Activated CD8-positive, alpha-beta T cell treated with anti-CD3 and anti-CD28 coated beads, Interleukin-2, amount 10 ng/mL, durations not matched to agents 7 days and 5 days (primary cell): ENCODE measurements at regions of chr3 and their contacts with region 1.

Region 1: GRCh38 chr3:111616417-111617105 is 21.4 kb upstream of the ZBED2 start:
- DNase-seq: peak; percentile 82
- ATAC-seq: peak; percentile 91
- H3K4me3 Mint-ChIP-seq: peak overlapping the region; percentile 45
- H3K27ac Mint-ChIP-seq: peak overlapping the region; percentile 94
- H3K4me1 Mint-ChIP-seq: peaks cover 79% of the 10 kb centered on the region
- H3K27me3 Mint-ChIP-seq: no peaks in the 10 kb centered on the region

Region 2: GRCh38 chr3:111338059-111338698 is 278.4 kb before region 1 on chr3:
- CTCF ChIA-PET with region 1: no interaction called
- POLR2A ChIA-PET with region 1: no interaction called
- DNase-seq: peak; percentile 69
- ATAC-seq: no peak
- H3K4me3 Mint-ChIP-seq: no peak overlapping the region
- H3K27ac Mint-ChIP-seq: peak overlapping the region; percentile 12
- H3K4me1 Mint-ChIP-seq: peaks cover 23% of the 10 kb centered on the region
- H3K27me3 Mint-ChIP-seq: no peaks in the 10 kb centered on the region

Region 3: DNA sequence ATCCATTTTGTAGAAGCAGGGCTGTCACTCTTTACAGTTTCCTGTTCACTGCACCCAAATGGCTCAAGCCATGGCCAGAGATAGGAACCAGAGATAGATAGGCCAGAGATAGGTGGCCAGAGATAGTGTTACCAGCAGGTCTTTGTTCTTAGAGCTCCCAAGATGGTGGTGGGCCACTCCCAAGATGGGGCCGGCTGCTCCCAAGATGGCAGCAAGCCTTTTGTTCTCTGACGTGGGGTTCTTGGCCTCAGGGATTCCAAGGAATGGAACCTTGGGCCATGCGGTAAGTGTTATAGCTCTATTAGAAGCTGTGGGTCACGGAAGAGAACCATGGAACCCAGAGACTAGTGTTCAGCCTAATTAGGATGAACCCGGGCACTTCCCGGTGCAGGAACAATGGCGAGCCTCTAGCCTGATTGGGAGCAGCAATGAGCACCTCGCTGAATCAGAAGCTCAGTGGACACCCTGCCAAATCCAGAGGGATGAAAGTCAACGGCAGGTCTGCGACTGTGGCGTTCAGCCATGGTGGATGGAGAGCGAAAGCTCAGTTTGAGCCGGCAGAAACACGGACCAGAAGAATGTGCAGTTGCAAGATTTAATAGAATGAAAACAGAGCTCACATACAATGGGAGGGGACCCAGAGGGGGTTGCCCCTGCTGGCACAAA is 119.5 kb before region 1 on chr3:
- CTCF ChIA-PET with region 1: no interaction called
- POLR2A ChIA-PET with region 1: no interaction called
- DNase-seq: no peak
- ATAC-seq: no peak
- H3K4me3 Mint-ChIP-seq: no peak overlapping the region
- H3K27ac Mint-ChIP-seq: no peak overlapping the region
- H3K4me1 Mint-ChIP-seq: no peaks in the 10 kb centered on the region
- H3K27me3 Mint-ChIP-seq: no peaks in the 10 kb centered on the region

Region 4: DNA sequence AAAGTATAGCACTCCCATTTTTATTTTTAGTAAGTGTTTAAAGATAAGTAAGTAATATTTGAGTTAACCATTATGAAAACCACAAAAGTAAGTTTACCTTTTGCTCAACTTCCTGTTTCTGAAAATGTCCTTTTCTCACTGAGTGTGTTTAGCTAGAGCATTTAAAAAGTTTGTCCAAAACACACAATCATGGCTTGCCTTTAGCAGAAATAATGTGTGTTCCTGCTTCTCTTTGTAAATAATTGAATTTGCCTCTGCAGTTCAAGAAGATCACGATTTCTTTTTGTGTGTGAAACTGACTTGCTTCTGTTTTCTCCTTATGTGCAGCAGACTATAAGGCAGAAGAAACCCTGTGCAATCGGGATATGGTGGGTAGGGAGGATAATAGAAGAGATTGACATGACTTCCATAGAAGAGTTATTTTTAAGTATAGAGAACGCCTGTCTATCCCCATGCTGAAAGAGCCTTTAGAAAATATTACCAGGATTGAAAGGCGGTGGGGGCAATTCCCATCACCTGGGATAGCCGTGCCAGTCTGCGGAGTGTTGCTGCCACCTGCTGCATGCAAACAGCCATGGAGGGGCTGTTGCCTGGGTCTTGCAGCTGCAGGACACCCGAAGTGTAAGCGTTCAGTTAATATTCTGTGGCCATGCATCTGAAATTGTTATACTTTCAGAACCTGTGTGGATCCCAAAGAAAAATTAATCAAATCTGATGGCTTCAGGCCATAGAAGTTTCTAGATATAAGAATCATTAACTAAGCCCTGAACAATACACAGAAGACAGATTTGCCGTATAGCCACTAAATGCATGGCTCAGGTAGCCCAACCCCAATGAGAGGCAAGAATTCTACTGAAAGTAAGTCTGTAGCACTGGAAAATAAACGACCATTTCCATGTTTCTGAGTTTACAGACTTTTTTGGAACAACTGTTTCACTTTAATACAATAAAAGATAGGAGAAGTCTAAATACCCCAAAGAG is 76.9 kb before region 1 on chr3:
- CTCF ChIA-PET with region 1: interaction called, 46 read pairs
- POLR2A ChIA-PET with region 1: interaction called, 16 read pairs
- DNase-seq: peak; percentile 80
- ATAC-seq: peak; percentile 59
- H3K4me3 Mint-ChIP-seq: peak overlapping the region; percentile 67
- H3K27ac Mint-ChIP-seq: peak overlapping the region; percentile 99
- H3K4me1 Mint-ChIP-seq: peaks cover 57% of the 10 kb centered on the region
- H3K27me3 Mint-ChIP-seq: no peaks in the 10 kb centered on the region

Region 5: DNA sequence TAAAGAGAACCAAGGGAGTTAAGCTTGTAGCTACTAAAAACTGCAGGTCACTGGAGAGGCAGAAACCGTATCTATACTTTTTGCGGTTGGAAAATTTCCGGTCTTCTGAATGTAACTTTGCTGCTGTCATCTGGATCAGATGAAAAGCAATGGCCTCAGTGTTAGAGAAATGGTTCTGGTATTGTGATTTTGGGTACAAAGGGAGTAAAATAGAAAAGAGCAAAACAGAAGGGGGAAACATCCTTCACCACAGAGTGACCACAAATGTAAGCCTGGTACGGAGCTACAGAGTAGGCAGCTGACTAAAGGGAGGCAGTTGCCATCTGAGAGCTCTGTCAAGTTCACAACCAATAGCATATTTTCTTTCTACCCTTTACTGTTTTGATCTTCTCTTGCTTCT is 68.9 kb before region 1 on chr3:
- CTCF ChIA-PET with region 1: interaction called, 46 read pairs
- POLR2A ChIA-PET with region 1: interaction called, 35 read pairs
- DNase-seq: peak; percentile 79
- ATAC-seq: peak; percentile 71
- H3K4me3 Mint-ChIP-seq: no peak overlapping the region
- H3K27ac Mint-ChIP-seq: no peak overlapping the region
- H3K4me1 Mint-ChIP-seq: peaks cover 29% of the 10 kb centered on the region
- H3K27me3 Mint-ChIP-seq: no peaks in the 10 kb centered on the region

Region 6: GRCh38 chr3:111577794-111578685 is 38.5 kb before region 1 on chr3:
- CTCF ChIA-PET with region 1: interaction called, 59 read pairs
- POLR2A ChIA-PET with region 1: interaction called, 16 read pairs
- DNase-seq: no peak
- ATAC-seq: peak; percentile 87
- H3K4me3 Mint-ChIP-seq: no peak overlapping the region
- H3K27ac Mint-ChIP-seq: peak overlapping the region; percentile 71
- H3K4me1 Mint-ChIP-seq: peaks cover 76% of the 10 kb centered on the region
- H3K27me3 Mint-ChIP-seq: no peaks in the 10 kb centered on the region

Region 7: DNA sequence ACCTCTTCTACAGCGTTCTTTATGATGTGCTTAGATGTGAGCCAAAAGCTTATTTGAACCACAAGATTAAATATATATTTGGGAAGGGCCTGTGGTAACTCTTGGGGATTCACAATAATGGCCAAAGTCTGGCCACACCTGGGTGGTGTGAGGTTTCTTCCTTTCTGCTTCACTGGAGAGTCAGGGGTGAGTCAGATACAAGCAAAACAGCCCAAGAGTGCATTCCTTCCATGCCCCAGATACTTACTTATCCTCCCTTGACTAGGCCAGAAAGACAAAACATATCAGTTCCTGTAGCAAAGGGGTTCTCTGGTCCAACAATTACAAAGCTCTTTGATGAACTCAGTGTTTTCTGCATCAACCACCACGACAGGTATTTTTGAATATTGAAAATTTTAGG is 22.4 kb before region 1 on chr3:
- CTCF ChIA-PET with region 1: interaction called, 26 read pairs
- POLR2A ChIA-PET with region 1: interaction called, 9 read pairs
- DNase-seq: no peak
- ATAC-seq: peak; percentile 48
- H3K4me3 Mint-ChIP-seq: peak overlapping the region; percentile 29
- H3K27ac Mint-ChIP-seq: peak overlapping the region; percentile 79
- H3K4me1 Mint-ChIP-seq: peaks cover 72% of the 10 kb centered on the region
- H3K27me3 Mint-ChIP-seq: no peaks in the 10 kb centered on the region

Region 8: DNA sequence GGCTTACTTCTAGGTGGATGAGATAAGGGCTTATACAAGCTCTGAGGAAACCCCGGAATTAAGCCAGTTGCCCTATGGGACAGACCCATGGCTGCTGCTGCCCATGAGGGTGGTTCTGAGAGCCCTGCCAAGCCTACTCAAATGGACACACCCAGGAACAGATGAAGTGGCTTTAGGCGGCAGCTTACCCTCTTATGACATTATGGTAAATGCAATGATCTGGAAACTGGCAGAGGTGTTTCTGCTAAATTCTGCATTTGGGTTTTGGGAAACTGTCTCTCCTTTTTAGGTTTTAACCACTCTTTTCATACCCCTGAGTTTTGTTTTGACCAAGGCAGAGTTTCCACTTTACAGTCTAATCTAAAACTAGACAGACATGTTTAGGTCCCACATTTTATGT is 12.4 kb before region 1 on chr3:
- CTCF ChIA-PET with region 1: interaction called, 24 read pairs
- POLR2A ChIA-PET with region 1: interaction called, 5 read pairs
- DNase-seq: no peak
- ATAC-seq: no peak
- H3K4me3 Mint-ChIP-seq: no peak overlapping the region
- H3K27ac Mint-ChIP-seq: peak overlapping the region; percentile 51
- H3K4me1 Mint-ChIP-seq: peaks cover 83% of the 10 kb centered on the region
- H3K27me3 Mint-ChIP-seq: no peaks in the 10 kb centered on the region

Region 9: DNA sequence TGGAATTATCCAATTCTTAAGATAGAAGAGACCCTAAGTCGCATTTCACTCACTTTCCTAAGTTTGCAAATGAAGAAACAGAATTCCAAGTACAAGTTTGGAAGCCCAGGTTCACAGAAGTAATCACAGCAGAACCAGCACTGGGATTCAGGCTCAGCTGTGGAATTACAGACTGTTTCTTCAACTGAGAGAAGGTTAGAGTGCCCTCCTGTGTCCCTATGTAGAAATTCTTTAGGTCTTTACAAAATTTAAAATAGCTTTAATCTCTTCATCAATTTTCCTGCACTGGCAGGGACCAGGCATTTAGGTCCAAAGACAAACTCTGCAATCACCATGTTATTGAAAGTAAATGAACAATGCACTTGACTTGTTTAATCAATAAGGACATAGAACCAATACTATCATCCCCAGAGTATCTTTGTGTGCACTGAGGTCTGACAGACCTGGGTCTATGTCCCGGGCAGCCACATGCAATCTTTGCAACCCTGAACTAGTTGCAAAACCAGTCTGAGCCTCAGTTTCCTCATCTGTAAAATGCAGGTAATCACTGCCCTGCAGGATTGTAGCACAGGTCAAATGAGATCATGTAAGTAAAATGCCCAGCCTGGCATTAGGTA is 74.8 kb after region 1 on chr3:
- CTCF ChIA-PET with region 1: interaction called, 19 read pairs
- POLR2A ChIA-PET with region 1: interaction called, 3 read pairs
- DNase-seq: no peak
- ATAC-seq: no peak
- H3K4me3 Mint-ChIP-seq: no peak overlapping the region
- H3K27ac Mint-ChIP-seq: peak overlapping the region; percentile 53
- H3K4me1 Mint-ChIP-seq: peaks cover 68% of the 10 kb centered on the region
- H3K27me3 Mint-ChIP-seq: no peaks in the 10 kb centered on the region